ENCODE measurements at regions of chr1 and their contacts with region 1.

Region 1: DNA sequence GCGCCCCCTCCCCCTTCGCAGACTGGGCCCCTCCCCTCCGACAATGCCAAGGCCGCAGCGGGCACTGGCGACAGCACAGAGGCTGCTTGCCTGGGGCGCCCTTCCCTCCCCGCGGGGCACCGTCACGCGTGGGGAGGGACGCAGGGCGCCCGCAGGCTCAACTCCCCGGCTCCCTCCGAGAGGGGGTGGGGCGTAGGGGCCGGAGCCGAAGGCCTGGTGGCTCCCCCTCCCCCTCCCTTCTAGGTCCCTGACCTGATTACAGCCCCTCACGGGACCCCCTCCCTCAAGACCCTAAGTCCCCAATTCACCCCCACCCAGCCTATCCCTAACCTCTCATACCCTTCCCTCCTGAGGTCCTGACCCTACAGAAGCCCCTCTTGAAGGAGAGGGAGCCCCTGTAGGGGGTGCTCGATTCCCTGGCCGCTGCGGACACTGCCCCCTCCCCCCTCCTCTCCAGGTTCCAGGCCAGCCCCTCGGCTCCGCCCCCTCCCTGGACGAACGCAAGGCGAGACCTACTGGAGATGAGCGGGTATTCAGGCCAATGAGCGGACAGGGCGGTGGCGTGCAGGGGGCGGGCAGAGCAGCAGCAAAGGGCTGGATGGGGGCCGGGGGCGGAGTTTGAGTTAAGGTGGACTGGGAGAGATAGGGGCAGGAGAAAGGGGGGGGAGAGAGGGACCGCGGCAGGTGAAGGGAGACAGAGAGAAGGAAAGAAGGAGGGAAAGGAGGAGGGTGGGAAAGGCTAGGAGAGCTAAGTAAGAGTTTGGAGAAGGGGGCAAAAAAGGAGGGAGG is 733 bp upstream of the ZBTB7B start:
- DNase-seq: peak; percentile 100
- ATAC-seq: peak; percentile 77
- H3K4me3 Mint-ChIP-seq: peak overlapping the region; percentile 98
- H3K27ac Mint-ChIP-seq: peak overlapping the region; percentile 97
- H3K4me1 Mint-ChIP-seq: peaks cover 57% of the 10 kb centered on the region
- H3K27me3 Mint-ChIP-seq: no peaks in the 10 kb centered on the region

Region 2: GRCh38 chr1:154583773-154584172 is 418.1 kb before region 1 on chr1:
- CTCF ChIA-PET with region 1: no interaction called
- DNase-seq: no peak
- ATAC-seq: no peak
- H3K4me3 Mint-ChIP-seq: no peak overlapping the region
- H3K27ac Mint-ChIP-seq: no peak overlapping the region
- H3K4me1 Mint-ChIP-seq: peaks cover 23% of the 10 kb centered on the region
- H3K27me3 Mint-ChIP-seq: no peaks in the 10 kb centered on the region

Region 3: DNA sequence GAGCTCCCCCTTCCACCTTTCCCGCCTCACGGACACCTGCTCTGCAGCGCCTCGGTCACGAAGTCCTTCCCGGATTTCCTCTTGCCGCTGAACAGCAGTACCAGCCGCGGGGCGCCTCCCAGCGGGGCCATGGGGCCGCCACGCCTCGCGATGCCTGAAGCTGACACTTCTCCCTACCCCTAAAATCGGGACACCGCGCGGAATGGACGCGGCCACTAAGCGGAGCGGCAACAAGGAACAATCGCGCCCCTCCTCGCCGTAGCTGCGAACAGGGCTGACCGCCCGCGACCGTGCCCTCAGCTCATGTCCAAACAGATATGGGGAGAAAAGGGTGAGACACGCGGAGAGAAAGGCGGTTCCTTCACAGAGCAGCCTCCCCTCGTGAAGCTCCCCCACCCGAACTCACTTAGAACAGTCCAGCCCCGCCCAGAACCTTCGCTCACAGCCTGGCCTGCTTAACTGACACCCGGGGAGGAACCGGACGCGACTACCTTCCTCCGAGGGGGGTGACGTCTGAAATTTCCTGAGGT is 65.2 kb before region 1 on chr1 and contains the start of gene PMVK:
- CTCF ChIA-PET with region 1: interaction called, 14 read pairs
- DNase-seq: peak; percentile 98
- ATAC-seq: peak; percentile 85
- H3K4me3 Mint-ChIP-seq: peak within 1 kb of the TSS; percentile 95
- H3K27ac Mint-ChIP-seq: peak within 1 kb of the TSS; percentile 96
- H3K4me1 Mint-ChIP-seq: peaks cover 61% of the 10 kb centered on the region
- H3K27me3 Mint-ChIP-seq: no peaks in the 10 kb centered on the region
- total RNA-seq, gene PMVK: 43.6 to 46.8 TPM

Region 4: DNA sequence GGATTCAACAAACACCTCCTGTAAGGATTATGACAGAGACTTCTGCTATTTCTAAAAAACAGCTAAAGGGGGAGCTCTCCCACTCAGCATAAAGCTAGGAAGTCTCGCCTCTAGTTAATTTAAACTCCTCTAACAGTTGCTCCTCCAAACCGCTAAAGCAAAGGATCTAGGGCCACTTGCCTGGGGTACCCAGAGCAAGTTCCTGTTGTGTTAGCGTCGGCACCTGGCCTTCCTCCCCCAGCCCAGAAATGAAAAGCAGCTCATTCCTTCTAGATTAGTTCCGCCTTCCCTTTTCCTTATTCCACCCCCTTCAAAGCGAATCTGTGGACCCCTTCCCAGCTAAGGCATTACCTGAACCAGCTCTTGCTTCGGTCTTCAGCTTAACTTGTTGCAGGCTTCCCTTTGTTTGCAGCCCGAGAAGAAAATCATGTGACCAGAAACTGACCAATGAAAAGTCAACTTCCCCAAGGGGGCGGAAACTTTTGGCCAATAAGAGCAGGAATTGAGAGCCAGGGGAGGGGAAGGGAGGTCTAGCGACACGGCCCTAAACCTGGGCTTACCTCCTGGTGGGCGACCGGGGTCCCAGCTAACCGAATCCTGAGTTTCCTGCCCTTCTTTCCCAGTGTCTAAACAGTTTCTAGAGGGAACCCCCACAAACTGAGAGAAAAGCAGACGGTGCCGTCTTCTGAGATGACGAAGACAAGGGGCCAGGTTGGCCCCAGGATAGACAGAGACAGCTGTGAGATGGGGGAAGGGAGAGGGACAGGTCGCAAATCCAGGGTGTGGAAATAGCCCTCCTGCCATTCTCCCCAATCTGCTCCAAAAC is 45.9 kb before region 1 on chr1 and contains the start of gene PBXIP1:
- CTCF ChIA-PET with region 1: interaction called, 46 read pairs
- DNase-seq: peak; percentile 92
- ATAC-seq: peak; percentile 62
- H3K4me3 Mint-ChIP-seq: peak within 1 kb of the TSS; percentile 95
- H3K27ac Mint-ChIP-seq: peak within 1 kb of the TSS; percentile 98
- H3K4me1 Mint-ChIP-seq: peaks cover 78% of the 10 kb centered on the region
- H3K27me3 Mint-ChIP-seq: no peaks in the 10 kb centered on the region
- total RNA-seq, gene PBXIP1: 52.6 to 61.5 TPM

Region 5: GRCh38 chr1:154961497-154962262 is 40.2 kb before region 1 on chr1 and contains the start of gene PYGO2:
- CTCF ChIA-PET with region 1: interaction called, 16 read pairs
- DNase-seq: peak; percentile 87
- ATAC-seq: peak; percentile 86
- H3K4me3 Mint-ChIP-seq: peak within 1 kb of the TSS; percentile 96
- H3K27ac Mint-ChIP-seq: peak within 1 kb of the TSS; percentile 91
- H3K4me1 Mint-ChIP-seq: peaks cover 44% of the 10 kb centered on the region
- H3K27me3 Mint-ChIP-seq: no peaks in the 10 kb centered on the region
- total RNA-seq, gene PYGO2: 44.0 to 47.9 TPM

Region 6: DNA sequence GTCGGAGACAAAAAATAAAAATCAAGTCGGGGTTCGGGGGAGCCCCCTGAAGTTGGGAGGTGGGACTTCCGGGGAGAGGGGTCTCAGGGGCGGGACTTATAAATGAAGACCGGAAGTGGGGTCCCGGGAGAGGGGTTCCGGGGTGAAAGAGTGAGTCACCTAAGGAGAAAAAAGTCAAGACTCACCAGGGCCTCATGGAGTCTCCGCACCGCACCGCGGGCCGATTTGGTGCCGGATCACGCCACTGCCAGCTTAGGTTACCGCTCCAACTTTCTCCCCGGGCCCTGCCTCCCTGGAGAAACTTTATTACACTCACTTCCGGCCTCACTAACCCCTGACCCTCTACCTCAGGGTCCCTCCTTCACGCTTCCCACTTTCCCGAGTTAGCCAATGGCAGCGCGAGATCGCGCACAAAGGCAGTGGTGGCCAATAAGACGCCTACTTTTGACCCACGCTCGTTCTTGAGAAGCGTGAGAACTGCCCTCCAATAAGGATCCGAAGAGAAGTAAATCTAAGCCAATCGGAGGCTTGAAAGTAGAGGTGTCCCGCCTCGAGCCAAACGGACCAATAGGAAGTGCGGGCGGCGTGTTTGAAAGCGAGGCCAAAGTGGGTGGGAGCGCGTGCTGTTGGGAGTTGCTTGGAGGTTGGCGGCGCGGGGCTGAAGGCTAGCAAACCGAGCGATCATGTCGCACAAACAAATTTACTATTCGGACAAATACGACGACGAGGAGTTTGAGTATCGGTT is 27.6 kb before region 1 on chr1 and contains the start of gene CKS1B:
- CTCF ChIA-PET with region 1: interaction called, 32 read pairs
- DNase-seq: peak; percentile 98
- ATAC-seq: peak; percentile 89
- H3K4me3 Mint-ChIP-seq: no peak within 1 kb of the TSS
- H3K27ac Mint-ChIP-seq: no peak within 1 kb of the TSS
- H3K4me1 Mint-ChIP-seq: peaks cover 38% of the 10 kb centered on the region
- H3K27me3 Mint-ChIP-seq: no peaks in the 10 kb centered on the region
- total RNA-seq, gene CKS1B: 149 to 155 TPM

Region 7: GRCh38 chr1:154982897-154983648 is 18.8 kb before region 1 on chr1 and contains the start of gene FLAD1:
- CTCF ChIA-PET with region 1: interaction called, 129 read pairs
- DNase-seq: peak; percentile 99
- ATAC-seq: peak; percentile 100
- H3K4me3 Mint-ChIP-seq: no peak within 1 kb of the TSS
- H3K27ac Mint-ChIP-seq: no peak within 1 kb of the TSS
- H3K4me1 Mint-ChIP-seq: peaks cover 25% of the 10 kb centered on the region
- H3K27me3 Mint-ChIP-seq: no peaks in the 10 kb centered on the region
- total RNA-seq, gene FLAD1: 48.2 to 63.7 TPM

Region 8: GRCh38 chr1:155029513-155030242 is 27.8 kb after region 1 on chr1:
- CTCF ChIA-PET with region 1: no interaction called
- DNase-seq: no peak
- ATAC-seq: no peak
- H3K4me3 Mint-ChIP-seq: no peak overlapping the region
- H3K27ac Mint-ChIP-seq: no peak overlapping the region
- H3K4me1 Mint-ChIP-seq: no peaks in the 10 kb centered on the region
- H3K27me3 Mint-ChIP-seq: peaks cover 6% of the 10 kb centered on the region

Region 9: GRCh38 chr1:155056071-155056470 is 54.2 kb after region 1 on chr1:
- CTCF ChIA-PET with region 1: interaction called, 328 read pairs
- DNase-seq: no peak
- ATAC-seq: no peak
- H3K4me3 Mint-ChIP-seq: no peak overlapping the region
- H3K27ac Mint-ChIP-seq: no peak overlapping the region
- H3K4me1 Mint-ChIP-seq: peaks cover 15% of the 10 kb centered on the region
- H3K27me3 Mint-ChIP-seq: no peaks in the 10 kb centered on the region

Measured in activated CD8-positive, alpha-beta memory T cell treated with anti-CD3 and anti-CD28 coated beads, Interleukin-2, amount 10 ng/mL, durations not matched to agents 7 days and 5 days (primary cell).